Right ventricle myocardium inferior (tissue), 1 donor: ENCODE measurements at regions of chr1 and their contacts with region 1.

Region 1: DNA sequence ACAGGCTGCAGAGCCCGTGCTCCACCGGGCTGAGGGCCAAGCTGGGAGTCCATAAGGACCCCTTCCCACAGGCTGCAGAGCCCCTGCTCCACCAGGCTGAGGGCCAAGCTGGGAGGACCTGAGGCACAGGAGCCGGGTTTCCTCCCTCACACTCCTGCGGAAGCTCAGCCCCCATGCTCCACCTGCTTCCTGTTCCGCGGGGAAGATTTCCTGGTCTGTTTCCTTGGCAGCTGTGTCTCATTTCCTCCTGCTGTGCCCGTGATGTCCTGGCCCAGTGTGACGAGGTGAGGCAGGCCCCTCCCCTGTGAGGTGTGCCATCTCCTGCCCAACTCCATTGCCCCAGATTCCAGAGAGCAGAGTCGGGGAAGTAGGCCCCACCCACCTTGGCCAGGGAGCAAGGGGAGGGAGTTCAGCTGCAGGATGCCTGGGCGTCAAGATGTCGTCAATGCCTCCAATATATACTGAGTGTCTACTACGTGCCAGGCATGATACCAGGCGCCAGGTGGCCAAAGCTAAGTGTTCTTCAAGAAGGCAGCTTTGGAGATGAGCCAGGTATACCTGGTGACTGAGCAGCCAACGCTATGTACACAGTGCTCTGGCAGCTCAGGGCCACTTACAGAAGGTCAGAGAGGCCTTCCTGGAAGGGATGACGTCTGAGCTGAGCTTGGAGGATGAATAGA is 58.8 kb downstream of the NAV1 start:
- DNase-seq: no peak
- ATAC-seq: no peak

Region 2: GRCh38 chr1:201566933-201567801 is 30.5 kb before region 1 on chr1:
- intact Hi-C with region 1: loop called (anchors 2 kb)
- DNase-seq: no peak
- ATAC-seq: no peak